ENCODE measurements at regions of chr2 and their contacts with region 1.

Region 1: DNA sequence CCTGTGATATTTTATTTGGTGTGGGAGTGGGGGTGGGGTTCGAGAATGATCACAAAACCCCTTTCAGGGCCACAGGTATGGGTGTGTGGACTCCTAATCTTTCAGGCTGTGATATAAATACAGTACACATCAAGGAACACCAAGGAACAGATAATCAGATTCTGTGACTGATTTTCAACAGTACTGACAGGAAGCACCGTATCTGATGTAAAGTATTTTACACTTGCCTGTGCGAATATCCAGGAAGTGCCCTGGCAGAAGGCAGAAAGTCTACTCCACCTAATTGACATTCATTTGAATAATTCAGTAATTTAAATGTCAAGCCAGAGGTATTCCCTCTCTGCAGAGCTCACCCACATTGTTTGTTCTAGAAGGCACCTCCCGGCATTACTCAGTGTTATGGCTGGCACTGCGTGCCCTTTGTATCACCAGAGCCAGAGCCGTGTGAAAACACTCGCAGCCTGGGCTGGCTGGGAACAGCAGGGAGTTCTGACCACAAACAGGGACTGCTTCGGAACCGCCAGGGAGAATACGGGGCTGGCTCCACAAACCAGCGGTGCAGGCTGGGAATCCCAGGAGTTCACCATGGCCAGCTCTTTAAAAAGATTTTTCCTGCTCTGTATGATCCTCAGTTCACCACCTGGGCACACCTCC is 91.8 kb downstream of the ACVR1 start:
- DNase-seq: peak; percentile 16
- ATAC-seq: peak; percentile 45
- H3K4me3 Mint-ChIP-seq: no peak overlapping the region
- H3K27ac Mint-ChIP-seq: peak overlapping the region; percentile 67
- H3K4me1 Mint-ChIP-seq: peaks cover 40% of the 10 kb centered on the region
- H3K27me3 Mint-ChIP-seq: no peaks in the 10 kb centered on the region
- CTCF ChIP-seq: no peak

Region 2: DNA sequence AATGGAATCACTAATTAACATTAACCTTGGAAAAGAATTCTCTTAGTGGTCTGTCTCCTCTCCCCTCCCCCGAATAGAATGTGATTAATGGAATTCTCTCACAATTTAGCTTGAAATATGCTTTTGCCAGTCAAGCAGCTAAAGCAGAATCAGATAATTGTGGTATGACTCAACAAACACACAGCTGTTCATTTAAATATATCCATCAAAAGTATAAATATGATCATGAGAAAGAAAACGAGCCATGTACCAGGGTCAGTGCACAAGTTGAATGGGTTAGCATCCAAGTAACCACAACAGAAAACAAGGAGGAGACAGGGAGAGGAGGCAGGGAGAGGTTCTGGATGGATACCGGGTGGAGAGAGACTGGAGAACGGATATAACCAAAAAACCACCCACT is 24.9 kb after region 1 on chr2:
- CTCF ChIA-PET with region 1: no interaction called
- POLR2A ChIA-PET with region 1: no interaction called
- intact Hi-C with region 1: no loop called
- DNase-seq: no peak
- ATAC-seq: no peak
- H3K4me3 Mint-ChIP-seq: no peak overlapping the region
- H3K27ac Mint-ChIP-seq: no peak overlapping the region
- H3K4me1 Mint-ChIP-seq: peaks cover 13% of the 10 kb centered on the region
- H3K27me3 Mint-ChIP-seq: no peaks in the 10 kb centered on the region
- CTCF ChIP-seq: no peak

Region 3: GRCh38 chr2:157876066-157876787 is 91.9 kb after region 1 on chr2 and contains the start of gene ACVR1:
- CTCF ChIA-PET with region 1: interaction called, 15 read pairs
- POLR2A ChIA-PET with region 1: interaction called, 5 read pairs
- intact Hi-C with region 1: loop called (anchors 5 kb)
- DNase-seq: peak; percentile 89
- ATAC-seq: peak; percentile 88
- H3K4me3 Mint-ChIP-seq: peak within 1 kb of the TSS; percentile 79
- H3K27ac Mint-ChIP-seq: peak within 1 kb of the TSS; percentile 86
- H3K4me1 Mint-ChIP-seq: peaks cover 49% of the 10 kb centered on the region
- H3K27me3 Mint-ChIP-seq: no peaks in the 10 kb centered on the region
- CTCF ChIP-seq: no peak
- total RNA-seq, gene ACVR1: 8.3 to 10.1 TPM